Posterior vena cava (tissue), 2 donors: ENCODE measurements at regions of chr22 and their contacts with region 1.

Region 1: GRCh38 chr22:27107824-27108223 is 450.4 kb downstream of the MIAT start:
- DNase-seq: peak; percentile 94

Region 2: GRCh38 chr22:26894766-26895485 is 212.9 kb before region 1 on chr22:
- intact Hi-C with region 1: loop called in 1 of 2 experiments (anchors 10 kb)
- DNase-seq: no peak

Region 3: DNA sequence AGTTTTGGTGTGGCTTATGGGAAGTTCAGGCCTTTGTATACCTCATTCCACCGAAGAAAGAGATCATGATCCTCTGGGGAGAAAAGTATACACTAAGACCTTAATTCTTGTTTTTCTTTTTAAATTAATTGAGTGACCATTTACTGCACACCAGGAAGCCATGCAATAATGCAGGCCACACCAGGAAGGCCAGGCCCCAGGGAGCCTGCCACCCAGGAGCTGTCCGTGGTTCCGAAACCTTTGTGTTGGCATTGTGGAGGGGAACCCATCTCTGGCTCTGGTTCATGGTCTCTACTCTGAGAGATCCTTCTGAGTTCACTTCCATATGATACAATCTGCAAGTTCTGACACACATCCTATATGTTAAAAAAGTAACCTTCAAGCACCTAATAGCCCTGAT is 158.6 kb before region 1 on chr22:
- intact Hi-C with region 1: no loop called
- DNase-seq: no peak

Region 4: DNA sequence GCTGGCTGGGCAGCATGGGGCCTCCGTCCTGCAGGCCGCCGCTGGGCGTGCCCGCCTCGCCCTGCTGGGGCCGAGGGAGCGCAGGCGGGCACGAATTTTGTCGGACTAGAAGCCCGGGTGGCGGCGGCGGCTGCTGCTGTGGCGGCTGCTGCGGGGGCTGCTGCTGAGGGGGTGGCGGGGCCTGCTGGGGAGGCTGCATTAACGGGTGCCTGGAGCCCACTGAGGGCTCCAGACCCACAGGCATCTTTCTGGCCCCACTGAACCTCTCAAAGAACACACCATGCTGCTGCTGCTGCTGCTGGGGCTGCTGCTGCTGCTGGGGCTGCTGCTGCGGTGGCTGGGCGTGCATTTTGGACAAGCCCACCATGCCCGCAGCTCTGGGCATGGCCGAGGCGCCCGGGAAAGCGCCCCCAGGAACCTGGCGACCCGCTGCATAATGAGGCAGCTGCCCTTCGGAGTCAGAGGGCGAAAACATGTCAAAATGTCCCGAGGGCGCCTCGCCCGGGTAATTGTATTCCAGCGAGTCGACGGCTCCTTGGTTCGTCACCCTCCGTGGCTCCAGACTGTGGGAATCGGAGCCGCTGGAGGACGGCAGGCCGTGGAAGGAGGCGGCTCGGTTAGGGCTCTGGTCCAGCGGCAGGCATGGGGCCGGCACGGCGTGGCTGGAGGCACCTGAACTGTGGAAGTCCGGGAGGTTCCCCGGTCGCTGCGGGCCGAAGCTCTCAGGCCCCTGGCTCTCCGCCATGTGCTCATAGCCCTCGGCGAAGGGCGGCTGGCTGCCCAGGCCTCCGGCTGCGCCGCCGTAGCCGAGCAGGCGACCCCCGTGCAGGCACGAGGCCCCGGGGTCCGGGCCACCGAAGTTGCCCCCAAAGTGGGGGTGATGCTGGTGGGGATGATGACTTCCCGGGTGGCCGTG is 691.8 kb after region 1 on chr22:
- intact Hi-C with region 1: loop called in 1 of 2 experiments (anchors 10 kb)
- DNase-seq: no peak